ENCODE measurements at regions of chr1 and their contacts with region 1.

Region 1: DNA sequence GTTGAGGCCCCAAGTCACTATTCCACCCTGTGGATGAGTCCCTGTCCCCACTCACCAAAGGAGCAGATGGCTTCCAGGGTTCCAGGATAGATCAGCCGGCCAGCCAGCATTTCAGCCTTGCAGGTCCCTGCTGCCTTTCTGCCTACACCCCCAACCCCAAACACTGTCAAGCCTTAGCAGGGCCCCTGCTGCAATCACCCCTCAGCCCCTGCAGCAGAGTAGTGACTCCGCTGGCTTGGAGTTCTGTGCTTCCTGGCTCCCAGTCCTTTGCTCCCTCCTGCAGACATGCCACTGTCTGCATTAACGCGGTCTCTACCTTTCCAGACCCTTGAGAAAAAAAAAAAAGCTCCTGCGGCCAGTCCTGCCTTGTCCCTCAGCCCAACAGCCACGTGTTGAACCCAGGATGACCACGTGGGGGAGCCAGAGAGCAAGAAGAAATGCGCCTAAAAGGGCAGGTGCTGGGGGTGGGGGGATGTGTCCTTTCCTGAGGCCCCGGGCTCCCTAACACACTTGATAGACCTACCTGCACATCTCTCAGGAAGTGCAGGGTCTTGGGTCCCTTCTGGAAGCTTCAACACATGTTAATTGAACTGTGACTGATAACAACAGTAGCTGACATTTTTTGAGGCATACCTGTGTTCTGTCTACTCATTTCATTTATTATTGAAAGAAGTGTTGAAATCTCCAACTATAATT is 37.4 kb downstream of the RASSF5 start:
- DNase-seq: peak; percentile 89
- H3K4me3 Mint-ChIP-seq: no peak overlapping the region
- H3K27ac Mint-ChIP-seq: peak overlapping the region; percentile 70
- H3K4me1 Mint-ChIP-seq: peaks cover 19% of the 10 kb centered on the region
- H3K27me3 Mint-ChIP-seq: no peaks in the 10 kb centered on the region

Region 2: GRCh38 chr1:205950280-205950679 is 594.4 kb before region 1 on chr1:
- CTCF ChIA-PET with region 1: no interaction called
- intact Hi-C with region 1: no loop called
- DNase-seq: no peak
- H3K4me3 Mint-ChIP-seq: no peak overlapping the region
- H3K27ac Mint-ChIP-seq: no peak overlapping the region
- H3K4me1 Mint-ChIP-seq: no peaks in the 10 kb centered on the region
- H3K27me3 Mint-ChIP-seq: peaks cover 3% of the 10 kb centered on the region

Region 3: DNA sequence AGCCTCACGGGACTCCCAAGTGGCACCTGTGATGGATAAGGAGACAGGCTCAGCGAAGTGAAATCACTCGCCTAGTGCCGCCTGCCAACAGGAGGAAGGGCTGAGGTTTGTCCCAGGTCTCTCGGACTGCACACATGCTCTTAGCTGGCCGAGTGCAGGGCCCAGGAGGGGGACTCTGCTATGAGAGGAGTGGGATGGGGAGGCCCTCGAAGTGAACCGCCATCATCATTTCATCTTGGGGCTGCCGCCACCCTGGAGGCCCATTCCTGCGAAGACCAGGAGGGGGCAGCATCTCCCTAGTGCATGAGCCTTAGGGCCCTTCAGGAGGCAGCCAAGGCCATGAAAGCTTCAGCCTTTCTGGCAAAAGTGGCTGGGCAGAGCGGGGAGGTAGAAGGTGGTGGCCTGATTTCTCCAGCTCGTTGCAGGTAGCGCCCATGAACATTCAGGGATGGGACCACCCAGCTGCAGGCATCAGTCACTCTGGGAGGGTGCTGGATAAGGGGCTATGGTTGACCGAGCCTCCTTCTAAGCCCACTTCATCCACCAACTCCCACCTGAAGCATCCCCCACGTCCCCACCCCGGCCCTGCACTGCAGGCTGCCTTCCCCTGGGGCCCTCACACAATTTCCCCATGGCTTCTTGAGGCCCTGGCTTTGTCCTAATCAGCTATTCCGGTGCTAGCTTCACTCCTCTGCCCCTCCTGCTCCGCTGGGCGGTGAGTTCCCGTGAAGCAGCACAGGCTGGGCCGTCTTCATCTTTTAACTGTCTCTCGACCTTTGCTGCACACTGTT is 54.5 kb before region 1 on chr1:
- CTCF ChIA-PET with region 1: interaction called, 13 read pairs
- intact Hi-C with region 1: loop called (anchors 2 kb)
- DNase-seq: peak; percentile 87
- H3K4me3 Mint-ChIP-seq: no peak overlapping the region
- H3K27ac Mint-ChIP-seq: no peak overlapping the region
- H3K4me1 Mint-ChIP-seq: no peaks in the 10 kb centered on the region
- H3K27me3 Mint-ChIP-seq: no peaks in the 10 kb centered on the region

Region 4: GRCh38 chr1:206507284-206508129 is 37.2 kb before region 1 on chr1 and contains the start of gene RASSF5:
- CTCF ChIA-PET with region 1: interaction called, 10 read pairs
- intact Hi-C with region 1: loop called (anchors 2 kb)
- DNase-seq: peak; percentile 92
- H3K4me3 Mint-ChIP-seq: peak within 1 kb of the TSS; percentile 74
- H3K27ac Mint-ChIP-seq: peak within 1 kb of the TSS; percentile 55
- H3K4me1 Mint-ChIP-seq: peaks cover 45% of the 10 kb centered on the region
- H3K27me3 Mint-ChIP-seq: peaks cover 22% of the 10 kb centered on the region
- total RNA-seq, gene RASSF5: 257 to 258 TPM

Region 5: GRCh38 chr1:206563367-206564207 is 18.9 kb after region 1 on chr1:
- CTCF ChIA-PET with region 1: interaction called, 78 read pairs
- intact Hi-C with region 1: loop called (anchors 1 kb)
- DNase-seq: peak; percentile 43
- H3K4me3 Mint-ChIP-seq: peak overlapping the region; percentile 82
- H3K27ac Mint-ChIP-seq: peak overlapping the region; percentile 100
- H3K4me1 Mint-ChIP-seq: peaks cover 78% of the 10 kb centered on the region
- H3K27me3 Mint-ChIP-seq: no peaks in the 10 kb centered on the region

Region 6: DNA sequence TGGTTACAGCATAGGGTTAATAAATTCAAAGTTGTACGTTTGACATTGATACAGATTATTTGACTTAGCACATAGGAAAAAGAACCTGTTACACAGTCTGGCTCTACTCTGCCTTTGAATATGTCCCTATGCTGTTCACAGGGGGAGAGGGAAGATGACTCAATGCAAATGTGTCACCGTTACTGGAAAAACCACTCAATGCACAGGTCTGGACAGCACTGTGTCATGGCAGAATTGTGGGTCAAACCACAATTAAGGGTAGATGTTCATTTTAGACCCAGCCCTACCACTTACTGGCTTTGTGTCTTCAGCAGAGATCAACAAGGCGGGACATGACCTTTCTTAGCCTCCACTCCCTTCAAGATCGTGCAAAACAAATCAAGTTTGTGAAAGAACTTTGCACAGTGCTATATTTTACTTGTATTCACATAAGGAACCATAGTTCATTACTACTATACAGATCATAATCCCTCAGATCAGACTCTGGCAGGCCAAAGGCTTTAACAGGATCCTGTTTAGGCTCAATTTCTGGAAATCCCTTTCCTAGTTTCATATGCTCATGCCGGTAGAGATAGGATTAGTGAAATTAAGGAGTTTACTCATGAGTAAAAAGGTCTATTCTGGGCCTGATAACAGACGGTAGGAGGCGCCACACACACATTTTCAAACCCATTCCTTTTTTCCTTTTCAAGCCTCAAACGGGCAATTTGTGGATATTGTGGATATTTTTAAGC is 45.5 kb after region 1 on chr1:
- CTCF ChIA-PET with region 1: interaction called, 511 read pairs
- intact Hi-C with region 1: loop called (anchors 1 kb)
- DNase-seq: peak; percentile 89
- H3K4me3 Mint-ChIP-seq: peak overlapping the region; percentile 52
- H3K27ac Mint-ChIP-seq: peak overlapping the region; percentile 100
- H3K4me1 Mint-ChIP-seq: peaks cover 72% of the 10 kb centered on the region
- H3K27me3 Mint-ChIP-seq: no peaks in the 10 kb centered on the region

Region 7: GRCh38 chr1:206649261-206649921 is 104.7 kb after region 1 on chr1:
- CTCF ChIA-PET with region 1: no interaction called
- intact Hi-C with region 1: no loop called
- DNase-seq: no peak
- H3K4me3 Mint-ChIP-seq: no peak overlapping the region
- H3K27ac Mint-ChIP-seq: no peak overlapping the region
- H3K4me1 Mint-ChIP-seq: no peaks in the 10 kb centered on the region
- H3K27me3 Mint-ChIP-seq: no peaks in the 10 kb centered on the region